ENCODE measurements at regions of chr14 and their contacts with region 1.

Region 1: GRCh38 chr14:89618811-89619551 is 201.9 kb upstream of the FOXN3 start:
- DNase-seq: peak; percentile 75
- H3K4me3 Mint-ChIP-seq: peak overlapping the region; percentile 94
- H3K27ac Mint-ChIP-seq: peak overlapping the region; percentile 98
- H3K4me1 Mint-ChIP-seq: peaks cover 65% of the 10 kb centered on the region
- H3K27me3 Mint-ChIP-seq: no peaks in the 10 kb centered on the region

Region 2: DNA sequence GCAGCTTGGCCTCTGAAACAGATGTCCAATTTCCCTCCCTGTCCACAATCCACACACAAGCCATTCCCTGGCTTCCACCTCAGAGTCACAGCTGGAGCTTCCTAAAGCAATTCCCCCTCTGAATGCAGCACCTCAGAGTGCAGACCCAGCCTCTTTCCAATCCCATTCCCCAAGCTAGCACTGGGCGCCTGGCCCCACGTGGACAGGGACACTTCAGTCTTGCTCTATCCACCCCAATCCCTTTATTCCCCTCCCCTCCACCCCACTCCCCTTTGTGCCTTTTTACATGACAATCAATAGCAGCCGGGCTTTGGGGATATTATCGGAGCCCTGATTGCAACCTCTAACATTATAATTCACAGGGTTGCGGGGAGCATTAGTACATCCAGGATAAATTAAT is 502.0 kb before region 1 on chr14:
- CTCF ChIA-PET with region 1: no interaction called
- DNase-seq: no peak
- H3K4me3 Mint-ChIP-seq: no peak overlapping the region
- H3K27ac Mint-ChIP-seq: no peak overlapping the region
- H3K4me1 Mint-ChIP-seq: no peaks in the 10 kb centered on the region
- H3K27me3 Mint-ChIP-seq: no peaks in the 10 kb centered on the region

Region 3: GRCh38 chr14:89641495-89642175 is 22.7 kb after region 1 on chr14:
- CTCF ChIA-PET with region 1: interaction called, 10 read pairs
- DNase-seq: peak; percentile 36
- H3K4me3 Mint-ChIP-seq: peak overlapping the region; percentile 59
- H3K27ac Mint-ChIP-seq: peak overlapping the region; percentile 97
- H3K4me1 Mint-ChIP-seq: peaks cover 63% of the 10 kb centered on the region
- H3K27me3 Mint-ChIP-seq: no peaks in the 10 kb centered on the region

Region 4: GRCh38 chr14:89707086-89707485 is 88.1 kb after region 1 on chr14:
- CTCF ChIA-PET with region 1: no interaction called
- DNase-seq: no peak
- H3K4me3 Mint-ChIP-seq: no peak overlapping the region
- H3K27ac Mint-ChIP-seq: no peak overlapping the region
- H3K4me1 Mint-ChIP-seq: peaks cover 16% of the 10 kb centered on the region
- H3K27me3 Mint-ChIP-seq: no peaks in the 10 kb centered on the region

Region 5: DNA sequence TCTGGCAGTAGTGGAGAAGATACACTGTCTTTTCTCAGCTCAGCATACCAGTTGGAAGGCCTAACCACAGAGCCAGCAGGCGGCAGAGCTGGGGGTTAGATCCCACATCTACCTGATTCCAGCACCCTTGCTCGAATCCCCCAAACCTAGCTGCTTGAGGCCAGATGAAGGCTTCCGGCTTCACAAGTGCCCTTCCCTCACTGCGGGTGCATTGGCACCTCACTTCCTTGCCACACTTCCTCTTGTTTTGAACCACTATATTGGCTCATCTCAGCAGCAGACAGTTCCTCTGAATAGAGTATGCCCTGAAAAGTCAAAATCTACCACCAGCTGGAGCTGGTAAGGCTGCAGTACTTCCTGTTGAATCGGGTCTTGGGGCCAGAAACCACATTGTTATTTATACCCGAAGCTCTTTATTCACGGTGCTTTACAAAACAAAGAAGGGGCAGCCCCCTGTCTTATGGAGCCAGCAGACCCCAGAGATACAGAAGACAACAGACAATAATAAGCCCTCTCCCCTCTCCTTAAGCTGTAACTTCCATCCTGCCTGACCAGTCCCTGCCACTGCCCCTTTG is 101.8 kb after region 1 on chr14:
- CTCF ChIA-PET with region 1: interaction called, 13 read pairs
- DNase-seq: peak; percentile 83
- H3K4me3 Mint-ChIP-seq: peak overlapping the region; percentile 24
- H3K27ac Mint-ChIP-seq: peak overlapping the region; percentile 98
- H3K4me1 Mint-ChIP-seq: peaks cover 76% of the 10 kb centered on the region
- H3K27me3 Mint-ChIP-seq: no peaks in the 10 kb centered on the region

Measured in activated naive CD4-positive, alpha-beta T cell treated with anti-CD3 and anti-CD28 coated beads, Interleukin-2, amount 10 ng/mL, durations not matched to agents 7 days and 5 days (primary cell).